Cardiac septum (tissue), 1 donor: ENCODE measurements at regions of chr15 and their contacts with region 1.

Region 1: DNA sequence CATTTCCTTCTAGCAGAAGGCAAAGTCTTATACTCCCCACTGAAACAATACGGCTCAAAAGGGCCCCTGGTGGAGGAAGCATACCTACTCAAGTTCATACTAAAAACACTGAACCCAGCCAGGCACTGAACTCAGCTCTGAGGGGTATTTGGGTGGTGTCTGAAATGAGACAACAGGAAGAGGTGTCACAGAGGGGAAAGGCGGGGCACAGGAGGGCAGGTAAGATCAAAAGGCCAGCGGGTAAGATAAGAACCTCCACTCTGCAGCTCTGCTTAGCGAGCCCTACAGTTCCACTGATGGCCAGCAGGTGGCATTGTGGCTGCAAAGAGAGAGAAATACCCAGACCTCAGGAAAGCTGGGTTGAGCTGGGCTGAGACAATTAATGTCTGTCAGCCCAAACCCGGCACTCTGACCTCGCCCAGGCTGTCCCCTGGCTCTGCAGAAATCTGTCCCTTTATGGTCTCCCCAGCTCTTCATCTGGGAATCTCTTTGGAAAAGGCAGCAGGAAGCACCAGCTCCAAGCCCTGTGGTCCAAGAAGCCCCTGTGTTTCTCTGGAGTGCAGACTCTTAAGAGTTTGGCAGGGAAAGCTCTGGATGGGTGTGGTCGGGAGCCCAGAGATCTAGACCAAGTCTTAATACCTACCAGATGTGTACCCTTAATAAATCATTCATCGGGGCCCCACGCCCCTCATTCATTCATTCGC is 8.4 kb downstream of the MFGE8 start:
- DNase-seq: peak; percentile 90

Region 2: DNA sequence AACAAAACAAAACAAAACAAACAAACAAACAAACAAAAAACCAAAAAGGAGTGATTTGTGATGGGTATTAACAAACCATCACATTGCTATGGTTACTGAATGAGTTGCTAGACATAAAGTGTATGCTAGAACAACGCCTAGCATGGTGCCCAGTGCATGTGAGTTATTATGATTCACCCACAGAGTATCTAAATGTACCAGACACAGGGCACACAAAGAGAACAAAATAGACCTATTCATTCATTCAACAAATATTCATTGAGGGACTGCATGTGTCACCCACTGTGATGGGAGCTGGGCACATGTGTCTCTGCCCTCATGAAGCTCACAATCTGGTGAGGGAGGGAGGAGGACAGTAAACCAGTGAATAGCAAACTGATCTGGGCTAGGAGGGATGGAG is 113.1 kb before region 1 on chr15:
- intact Hi-C with region 1: no loop called
- DNase-seq: no peak

Region 3: DNA sequence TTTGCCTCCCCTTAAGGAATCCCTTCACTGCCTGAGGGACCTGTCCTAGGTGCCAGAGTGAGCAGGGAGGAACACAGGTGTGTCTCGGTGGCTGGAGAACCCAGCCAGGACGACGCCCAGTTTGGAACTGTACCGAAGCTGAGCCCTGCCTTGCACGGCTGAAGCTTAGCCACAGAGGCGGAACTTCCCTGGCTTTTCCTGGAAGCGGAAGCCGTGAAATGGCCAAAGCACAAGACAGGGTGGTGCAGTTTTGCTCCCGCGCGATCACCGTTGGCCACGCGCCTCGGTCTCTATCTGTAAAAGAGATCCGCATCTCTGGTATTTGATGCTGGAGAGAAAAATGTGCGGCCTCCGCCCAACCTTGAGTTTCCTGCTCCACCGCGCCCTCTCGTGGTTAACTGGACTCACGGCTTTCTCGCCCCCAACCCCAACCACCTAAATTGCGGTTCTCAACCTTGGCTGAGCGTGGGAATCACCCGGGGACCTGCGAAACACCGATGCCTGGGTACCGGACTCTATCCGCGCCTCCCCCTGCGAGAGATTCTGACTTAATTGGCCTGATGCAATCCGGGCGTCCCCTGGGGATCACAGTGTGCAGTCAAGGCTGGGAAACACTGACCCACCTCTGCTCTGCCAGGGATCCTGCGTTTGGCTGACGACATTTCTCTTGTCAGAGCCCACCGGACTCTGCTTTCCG is 112.7 kb after region 1 on chr15:
- intact Hi-C with region 1: loop called (anchors 2 kb)
- DNase-seq: peak; percentile 89